Activated CD4-positive, alpha-beta T cell treated with anti-CD3 and anti-CD28 coated beads, Interleukin-2, amount 10 ng/mL, durations not matched to agents 24 days and 14 days (primary cell): ENCODE measurements at regions of chr4 and their contacts with region 1.

Region 1: GRCh38 chr4:138680989-138681604 is 334.5 kb upstream of the NOCT start:
- DNase-seq: peak; percentile 90
- H3K4me3 Mint-ChIP-seq: no peak overlapping the region
- H3K27ac Mint-ChIP-seq: no peak overlapping the region
- H3K4me1 Mint-ChIP-seq: no peaks in the 10 kb centered on the region
- H3K27me3 Mint-ChIP-seq: peaks cover 13% of the 10 kb centered on the region

Region 2: GRCh38 chr4:138035781-138036258 is 645.3 kb before region 1 on chr4:
- intact Hi-C with region 1: loop called (anchors 1 kb)
- DNase-seq: peak; percentile 56
- H3K4me3 Mint-ChIP-seq: no peak overlapping the region
- H3K27ac Mint-ChIP-seq: no peak overlapping the region
- H3K4me1 Mint-ChIP-seq: no peaks in the 10 kb centered on the region
- H3K27me3 Mint-ChIP-seq: no peaks in the 10 kb centered on the region

Region 3: GRCh38 chr4:138627096-138627495 is 54.0 kb before region 1 on chr4:
- intact Hi-C with region 1: no loop called
- DNase-seq: no peak
- H3K4me3 Mint-ChIP-seq: no peak overlapping the region
- H3K27ac Mint-ChIP-seq: no peak overlapping the region
- H3K4me1 Mint-ChIP-seq: no peaks in the 10 kb centered on the region
- H3K27me3 Mint-ChIP-seq: no peaks in the 10 kb centered on the region

Region 4: DNA sequence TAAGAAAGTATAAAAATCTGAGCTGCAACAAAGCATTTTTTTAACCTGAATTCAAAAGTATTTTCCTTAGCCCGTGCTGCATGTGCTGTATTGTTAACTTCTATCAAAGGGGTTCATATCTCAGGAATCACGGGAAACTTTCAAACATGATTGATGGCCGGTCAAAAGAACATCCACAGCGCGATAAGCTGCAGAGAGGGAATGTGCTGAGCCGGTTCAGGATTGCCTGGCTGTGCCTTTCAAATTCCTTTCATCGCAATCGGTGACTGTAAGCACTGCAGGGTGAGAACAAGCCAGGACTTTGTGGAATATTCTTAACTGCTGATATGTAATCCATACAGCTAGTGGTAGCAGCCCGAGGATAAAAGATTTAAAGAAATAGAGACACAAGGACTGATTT is 123.6 kb after region 1 on chr4:
- intact Hi-C with region 1: no loop called
- DNase-seq: no peak
- H3K4me3 Mint-ChIP-seq: no peak overlapping the region
- H3K27ac Mint-ChIP-seq: no peak overlapping the region
- H3K4me1 Mint-ChIP-seq: no peaks in the 10 kb centered on the region
- H3K27me3 Mint-ChIP-seq: peaks cover 11% of the 10 kb centered on the region

Region 5: DNA sequence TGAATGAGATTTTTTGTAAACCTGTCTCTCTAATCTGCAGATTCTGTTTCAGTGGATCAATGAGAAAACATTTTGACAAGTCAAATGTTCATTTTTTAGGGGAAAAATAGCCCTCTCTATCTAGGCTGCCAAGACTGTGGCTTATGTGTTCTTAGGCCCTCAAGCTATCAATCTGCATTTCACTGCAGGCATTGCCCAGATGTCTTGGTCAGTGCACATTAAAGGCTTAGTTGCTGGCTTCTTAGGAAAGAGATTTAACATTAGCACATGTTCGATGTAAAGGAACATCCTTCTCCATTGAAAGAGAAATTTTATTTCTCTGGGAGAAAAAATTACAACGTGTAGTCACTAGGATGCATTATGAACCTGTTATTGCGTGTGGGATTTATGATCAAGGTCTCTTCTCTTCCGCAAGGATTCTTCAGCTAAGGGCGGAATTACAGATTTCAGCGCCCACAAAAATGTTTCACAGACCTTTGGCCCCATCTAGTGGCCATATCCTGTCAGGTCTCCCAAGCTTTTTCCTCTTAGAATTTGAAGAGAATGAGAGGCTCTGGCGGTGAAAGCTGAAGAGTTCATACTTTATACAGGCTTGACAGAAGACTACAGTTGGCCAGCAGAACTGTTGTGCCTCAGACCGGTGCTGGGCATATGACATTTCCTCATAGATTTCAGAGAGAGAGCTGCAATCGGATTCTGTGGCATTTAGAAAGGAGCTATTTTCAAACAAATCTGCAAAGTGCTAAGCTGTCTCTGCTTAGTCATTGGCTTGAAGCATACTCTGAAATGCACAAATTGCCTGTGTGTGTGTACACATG is 189.8 kb after region 1 on chr4:
- intact Hi-C with region 1: loop called (anchors 2 kb)
- DNase-seq: peak; percentile 85
- H3K4me3 Mint-ChIP-seq: no peak overlapping the region
- H3K27ac Mint-ChIP-seq: no peak overlapping the region
- H3K4me1 Mint-ChIP-seq: no peaks in the 10 kb centered on the region
- H3K27me3 Mint-ChIP-seq: peaks cover 19% of the 10 kb centered on the region

Region 6: DNA sequence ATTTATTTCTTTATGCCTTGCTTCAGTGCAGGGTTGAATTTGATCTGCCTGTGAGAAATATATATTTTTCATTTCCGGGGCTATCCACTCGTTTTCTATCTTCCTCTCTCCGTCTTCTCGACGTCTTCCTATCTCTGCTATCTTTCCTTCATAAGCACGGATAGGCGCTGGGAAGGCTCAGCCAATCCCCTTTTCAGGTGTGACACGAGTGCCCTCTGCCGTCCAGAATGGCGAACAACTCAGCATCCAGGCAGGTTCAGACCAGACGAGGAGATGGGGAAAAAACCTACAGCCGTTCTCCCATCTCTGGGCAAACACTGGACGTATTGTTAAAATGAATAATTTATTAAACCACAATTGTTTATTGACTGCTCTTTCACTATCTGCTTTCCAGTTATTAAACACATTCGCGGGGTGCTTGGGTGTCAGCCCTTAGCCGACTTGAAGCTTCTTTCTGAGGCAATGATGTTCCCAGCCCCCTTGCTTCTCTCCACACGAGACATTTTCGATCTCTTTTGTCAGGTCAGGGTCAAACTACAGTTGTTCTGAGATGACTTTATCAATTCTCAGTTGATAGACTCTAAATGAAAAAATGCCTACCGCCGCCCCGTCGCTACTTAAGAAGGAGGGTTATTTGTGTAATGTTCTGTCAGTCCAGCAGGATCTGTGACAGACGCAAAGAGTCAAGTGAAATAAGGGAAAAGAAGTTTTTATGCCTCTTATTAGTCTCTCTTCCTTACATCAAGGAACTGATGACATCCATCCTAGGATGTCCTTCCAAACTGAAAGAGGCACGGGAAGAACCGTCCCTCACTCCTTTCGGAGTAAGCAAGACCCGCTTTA is 238.2 kb after region 1 on chr4:
- intact Hi-C with region 1: loop called (anchors 5 kb)
- DNase-seq: peak; percentile 83
- H3K4me3 Mint-ChIP-seq: no peak overlapping the region
- H3K27ac Mint-ChIP-seq: no peak overlapping the region
- H3K4me1 Mint-ChIP-seq: peaks cover 2% of the 10 kb centered on the region
- H3K27me3 Mint-ChIP-seq: peaks cover 10% of the 10 kb centered on the region